Caco-2 (cell line): ENCODE measurements at regions of chr6 and their contacts with region 1.

Region 1: GRCh38 chr6:49606696-49607390 is 29.8 kb downstream of the RHAG start:
- DNase-seq: peak in 1 of 2 experiments; percentile 55
- H3K4me3 ChIP-seq: no peak overlapping the region
- H3K4me3 Mint-ChIP-seq: no peak overlapping the region
- H3K27ac Mint-ChIP-seq: no peak overlapping the region
- H3K4me1 ChIP-seq: no peaks in the 10 kb centered on the region
- H3K4me1 Mint-ChIP-seq: no peaks in the 10 kb centered on the region
- H3K27me3 ChIP-seq: no peaks in the 10 kb centered on the region
- H3K27me3 Mint-ChIP-seq: peaks cover 2% of the 10 kb centered on the region
- CTCF ChIP-seq: peak; percentile 66 to 85

Region 2: GRCh38 chr6:49453221-49453620 is 153.6 kb before region 1 on chr6:
- CTCF ChIA-PET with region 1: no interaction called
- POLR2A ChIA-PET with region 1: no interaction called
- intact Hi-C with region 1: loop called (anchors 2 kb)
- DNase-seq: no peak
- H3K4me3 ChIP-seq: no peak overlapping the region
- H3K4me3 Mint-ChIP-seq: no peak overlapping the region
- H3K27ac Mint-ChIP-seq: no peak overlapping the region
- H3K4me1 ChIP-seq: no peaks in the 10 kb centered on the region
- H3K4me1 Mint-ChIP-seq: no peaks in the 10 kb centered on the region
- H3K27me3 ChIP-seq: no peaks in the 10 kb centered on the region
- H3K27me3 Mint-ChIP-seq: no peaks in the 10 kb centered on the region
- CTCF ChIP-seq: peak in 1 of 2 experiments; percentile 46

Region 3: GRCh38 chr6:49462927-49463611 is 143.8 kb before region 1 on chr6 and contains the starts of genes CENPQ and MMUT:
- CTCF ChIA-PET with region 1: no interaction called
- POLR2A ChIA-PET with region 1: no interaction called
- intact Hi-C with region 1: loop called (anchors 2 kb)
- DNase-seq: peak; percentile 93 to 94
- H3K4me3 ChIP-seq: peak within 1 kb of the TSS; percentile 53
- H3K4me3 Mint-ChIP-seq: peak within 1 kb of the TSS; percentile 86
- H3K27ac Mint-ChIP-seq: peak within 1 kb of the TSS; percentile 99
- H3K4me1 ChIP-seq: peaks cover 5% of the 10 kb centered on the region; the same call in 1 of the 2 replicates
- H3K4me1 Mint-ChIP-seq: no peaks in the 10 kb centered on the region
- H3K27me3 ChIP-seq: no peaks in the 10 kb centered on the region
- H3K27me3 Mint-ChIP-seq: no peaks in the 10 kb centered on the region
- CTCF ChIP-seq: no peak
- total RNA-seq, gene CENPQ: 12.4 and 13.4 TPM in 2 replicates
- total RNA-seq, gene MMUT: 11.1 and 12.1 TPM in 2 replicates

Region 4: GRCh38 chr6:49531774-49532569 is 74.9 kb before region 1 on chr6:
- CTCF ChIA-PET with region 1: interaction called, 18 read pairs
- POLR2A ChIA-PET with region 1: no interaction called
- intact Hi-C with region 1: loop called (anchors 1 kb)
- DNase-seq: peak in 1 of 2 experiments; percentile 32
- H3K4me3 ChIP-seq: no peak overlapping the region
- H3K4me3 Mint-ChIP-seq: no peak overlapping the region
- H3K27ac Mint-ChIP-seq: no peak overlapping the region
- H3K4me1 ChIP-seq: no peaks in the 10 kb centered on the region
- H3K4me1 Mint-ChIP-seq: no peaks in the 10 kb centered on the region
- H3K27me3 ChIP-seq: no peaks in the 10 kb centered on the region
- H3K27me3 Mint-ChIP-seq: no peaks in the 10 kb centered on the region
- CTCF ChIP-seq: peak; percentile 80 to 82

Region 5: GRCh38 chr6:49556429-49556841 is 50.4 kb before region 1 on chr6:
- CTCF ChIA-PET with region 1: no interaction called
- POLR2A ChIA-PET with region 1: no interaction called
- intact Hi-C with region 1: loop called (anchors 1 kb)
- DNase-seq: peak; percentile 64 to 68
- H3K4me3 ChIP-seq: no peak overlapping the region
- H3K4me3 Mint-ChIP-seq: peak overlapping the region; percentile 15
- H3K27ac Mint-ChIP-seq: no peak overlapping the region
- H3K4me1 ChIP-seq: peaks cover 15% of the 10 kb centered on the region
- H3K4me1 Mint-ChIP-seq: peaks cover 12% of the 10 kb centered on the region
- H3K27me3 ChIP-seq: no peaks in the 10 kb centered on the region
- H3K27me3 Mint-ChIP-seq: no peaks in the 10 kb centered on the region
- CTCF ChIP-seq: no peak

Region 6: DNA sequence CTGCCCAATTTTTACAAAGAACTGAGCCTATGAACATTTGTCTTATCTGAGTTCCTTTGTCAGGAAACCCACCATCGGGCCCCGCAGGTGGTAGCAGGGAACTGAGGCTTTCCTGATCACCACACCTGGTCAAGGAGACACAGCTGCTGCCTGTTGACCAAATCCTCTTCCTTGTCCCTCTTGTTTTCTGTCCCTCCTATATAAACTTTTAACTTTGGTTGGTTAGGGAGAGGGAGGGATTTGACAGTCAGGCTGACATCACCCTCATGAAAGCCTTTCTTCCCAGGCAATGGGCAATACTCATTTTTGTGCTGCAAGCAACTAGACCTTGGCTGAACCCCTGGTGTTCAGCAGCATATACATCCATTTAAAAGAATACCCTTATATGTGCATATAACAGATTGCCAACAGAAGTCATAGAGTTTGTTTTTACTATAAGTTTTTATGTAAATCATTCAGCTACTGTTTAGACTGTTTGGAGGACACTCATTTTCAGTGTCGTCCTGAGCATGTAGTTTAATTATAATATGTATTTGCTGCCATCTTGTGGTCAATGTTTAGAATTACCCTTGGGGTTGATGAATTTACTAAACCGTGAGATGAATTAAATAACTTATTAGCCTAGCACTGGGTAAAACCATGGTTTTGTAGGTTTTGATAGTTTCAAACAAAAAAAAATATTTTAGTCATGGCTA is 242.5 kb after region 1 on chr6:
- CTCF ChIA-PET with region 1: no interaction called
- POLR2A ChIA-PET with region 1: no interaction called
- intact Hi-C with region 1: loop called (anchors 1 kb)
- DNase-seq: peak in 1 of 2 experiments; percentile 30
- H3K4me3 ChIP-seq: no peak overlapping the region
- H3K4me3 Mint-ChIP-seq: no peak overlapping the region
- H3K27ac Mint-ChIP-seq: no peak overlapping the region
- H3K4me1 ChIP-seq: no peaks in the 10 kb centered on the region
- H3K4me1 Mint-ChIP-seq: no peaks in the 10 kb centered on the region
- H3K27me3 ChIP-seq: no peaks in the 10 kb centered on the region
- H3K27me3 Mint-ChIP-seq: no peaks in the 10 kb centered on the region
- CTCF ChIP-seq: peak; percentile 27 to 57